ENCODE measurements at regions of chr14 and their contacts with region 1.

Region 1: DNA sequence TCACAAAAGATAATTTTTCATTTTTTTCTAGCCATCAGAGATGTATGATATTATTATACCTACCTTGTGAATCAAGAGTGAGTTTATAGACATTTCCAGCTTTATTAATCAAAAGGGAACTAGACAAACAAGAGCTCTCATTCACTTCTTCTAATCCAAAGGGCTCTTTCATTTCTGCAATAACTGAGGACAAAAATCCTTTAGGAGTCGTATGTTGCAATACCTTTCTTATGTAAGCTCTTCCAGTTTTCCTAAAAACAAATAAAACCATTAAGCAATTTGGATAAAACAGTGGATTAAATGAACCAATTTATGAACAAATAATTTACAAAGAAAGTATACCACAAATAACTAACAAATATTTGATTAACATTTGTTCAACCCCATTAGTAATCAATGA is 107.1 kb downstream of the CATSPERB start:
- DNase-seq: no peak
- ATAC-seq: no peak
- H3K4me3 ChIP-seq: no peak overlapping the region
- H3K27ac ChIP-seq: no peak overlapping the region
- H3K4me1 ChIP-seq: no peaks in the 10 kb centered on the region
- H3K27me3 ChIP-seq: no peaks in the 10 kb centered on the region
- CTCF ChIP-seq: no peak

Region 2: GRCh38 chr14:91554535-91555332 is 70.0 kb before region 1 on chr14:
- intact Hi-C with region 1: loop called in 1 of 3 experiments (anchors 10 kb)
- DNase-seq: no peak
- ATAC-seq: no peak
- H3K4me3 ChIP-seq: no peak overlapping the region
- H3K27ac ChIP-seq: no peak overlapping the region
- H3K4me1 ChIP-seq: no peaks in the 10 kb centered on the region
- H3K27me3 ChIP-seq: no peaks in the 10 kb centered on the region
- CTCF ChIP-seq: no peak

Region 3: GRCh38 chr14:91998667-91999570 is 374.2 kb after region 1 on chr14:
- intact Hi-C with region 1: no loop called
- DNase-seq: no peak
- ATAC-seq: no peak
- H3K4me3 ChIP-seq: no peak overlapping the region
- H3K27ac ChIP-seq: no peak overlapping the region
- H3K4me1 ChIP-seq: peaks cover 0 to 18% (median 10%) of the 10 kb centered on the region in 3 donors
- H3K27me3 ChIP-seq: no peaks in the 10 kb centered on the region
- CTCF ChIP-seq: no peak

Measured in pancreas (tissue), 10 donors.